ENCODE measurements at regions of chr20 and their contacts with region 1.

Region 1: DNA sequence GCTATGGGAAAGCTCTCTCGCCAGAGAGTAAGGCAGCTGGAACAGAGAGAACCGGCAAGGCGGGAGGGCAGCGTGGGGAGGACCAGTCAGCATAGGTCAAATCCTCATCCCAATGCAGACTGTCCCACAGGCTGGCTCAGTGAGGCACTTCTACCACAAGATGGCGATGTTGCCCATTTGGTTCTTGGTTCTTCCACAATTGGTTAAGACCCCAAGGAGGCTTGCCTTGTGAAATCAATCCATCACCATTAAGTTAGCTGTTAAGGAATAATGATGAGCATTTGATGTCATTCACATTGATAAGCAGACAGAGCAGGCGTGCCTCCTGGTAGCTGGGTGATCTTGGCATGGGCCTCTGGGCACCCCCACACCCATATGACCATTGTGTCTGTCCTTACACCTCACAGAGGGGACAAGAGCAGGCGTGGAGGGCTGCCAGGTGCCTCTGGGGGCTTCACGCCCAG is 2.4 kb downstream of the CSTL1 start:
- DNase-seq: peak; percentile 82
- CTCF ChIP-seq: peak; percentile 85

Region 2: GRCh38 chr20:23606652-23607049 is 164.8 kb after region 1 on chr20:
- in situ Hi-C with region 1: loop called (anchors 10 kb)
- DNase-seq: peak; percentile 89
- CTCF ChIP-seq: peak; percentile 90

Region 3: DNA sequence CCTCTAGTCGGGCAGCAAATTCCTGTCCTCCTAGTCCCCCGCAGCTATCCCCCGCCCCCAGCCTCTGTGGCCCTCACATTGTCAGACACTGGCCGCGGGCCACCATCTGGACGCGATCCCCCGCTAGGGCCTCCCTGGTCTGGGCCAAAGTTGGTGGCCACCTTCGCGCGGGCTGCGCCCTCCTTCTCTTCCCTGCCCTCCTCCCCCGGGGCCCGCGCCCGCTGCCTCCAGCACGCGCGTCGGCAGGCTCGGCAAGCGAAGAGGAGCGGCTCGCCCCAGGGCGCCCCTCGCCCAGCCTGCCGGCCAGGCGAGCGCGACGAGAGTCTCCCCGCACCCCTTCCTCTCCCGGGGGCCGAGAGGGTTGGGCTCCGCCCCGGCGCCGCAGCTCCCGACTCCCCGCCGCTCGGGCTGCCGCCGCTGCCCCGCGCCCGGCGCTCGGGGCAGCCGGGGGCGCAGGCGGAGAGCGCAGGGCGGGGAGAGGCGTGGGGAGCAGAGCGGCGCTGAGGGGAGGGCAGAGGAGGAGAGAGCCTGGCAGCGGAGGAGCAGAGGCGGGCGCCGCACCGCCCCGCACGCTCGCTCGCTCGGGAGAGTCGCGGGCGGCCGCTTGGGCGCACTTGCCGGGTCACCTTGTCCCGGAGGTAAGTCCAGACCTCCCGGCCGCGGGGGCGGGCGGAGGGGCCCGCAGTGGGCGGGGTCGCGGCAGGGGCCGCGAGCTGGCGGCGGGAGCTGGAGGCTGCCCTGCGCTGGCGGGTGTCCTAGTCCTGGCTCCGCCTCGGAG is 1027.4 kb after region 1 on chr20 and contains the start of gene SYNDIG1:
- in situ Hi-C with region 1: no loop called
- DNase-seq: peak; percentile 26
- CTCF ChIP-seq: no peak

Measured in GM13976 (cell line).